Activated CD4-positive, alpha-beta memory T cell treated with anti-CD3 and anti-CD28 coated beads, Interleukin-2, amount 10 ng/mL, durations not matched to agents 7 days and 5 days (primary cell): ENCODE measurements at regions of chr19 and their contacts with region 1.

Region 1: GRCh38 chr19:17405250-17406038 is at the start of gene BST2:
- DNase-seq: peak; percentile 69
- H3K4me3 Mint-ChIP-seq: peak within 1 kb of the TSS; percentile 93
- H3K27ac Mint-ChIP-seq: peak within 1 kb of the TSS; percentile 98
- H3K4me1 Mint-ChIP-seq: peaks cover 35% of the 10 kb centered on the region
- H3K27me3 Mint-ChIP-seq: no peaks in the 10 kb centered on the region
- total RNA-seq, gene BST2: 288 to 301 TPM

Region 2: DNA sequence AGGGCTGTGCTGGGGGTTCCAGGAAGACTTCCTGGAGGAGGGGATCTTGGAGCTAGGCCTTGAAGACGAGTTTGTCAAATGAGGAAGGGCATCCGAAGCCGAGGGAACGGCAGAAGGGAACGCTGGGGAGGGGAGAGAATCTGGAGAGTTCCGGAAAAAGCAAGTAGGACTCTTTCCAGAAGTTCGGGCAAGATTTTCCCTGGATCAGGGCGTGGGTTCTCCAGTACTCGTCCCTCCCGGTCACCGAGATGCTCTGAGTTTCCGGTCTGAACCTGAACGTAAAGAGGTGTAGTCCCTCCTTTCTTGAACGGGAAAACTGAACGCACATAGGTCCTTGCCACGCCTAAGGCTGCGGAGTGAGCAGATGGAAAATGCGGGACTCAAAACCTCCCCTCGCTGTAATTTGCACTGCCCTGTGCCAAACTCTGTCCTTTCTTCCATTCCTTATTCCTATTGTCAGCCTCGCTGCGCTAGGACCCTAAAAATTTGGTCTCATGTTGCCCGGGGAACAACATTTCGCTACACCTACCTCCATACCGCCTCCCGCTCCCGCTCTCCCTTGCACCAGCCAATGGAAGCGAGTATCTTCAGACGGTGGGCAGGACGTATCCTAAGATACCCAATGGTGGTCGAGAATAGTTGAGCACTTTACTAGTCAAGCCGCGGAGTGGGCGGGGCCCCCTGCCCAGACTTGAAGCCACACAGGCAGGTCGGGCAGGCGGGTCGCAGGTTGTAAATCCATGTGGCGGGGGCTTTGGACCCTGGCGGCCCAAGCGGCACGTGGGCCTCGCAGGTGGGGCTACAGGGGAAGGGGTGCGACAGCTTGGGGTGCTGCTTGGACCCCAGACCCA is 68.3 kb before region 1 on chr19 and contains the start of gene GTPBP3:
- CTCF ChIA-PET with region 1: no interaction called
- POLR2A ChIA-PET with region 1: interaction called, 10 read pairs
- DNase-seq: peak; percentile 98
- H3K4me3 Mint-ChIP-seq: peak within 1 kb of the TSS; percentile 81
- H3K27ac Mint-ChIP-seq: peak within 1 kb of the TSS; percentile 89
- H3K4me1 Mint-ChIP-seq: peaks cover 55% of the 10 kb centered on the region
- H3K27me3 Mint-ChIP-seq: no peaks in the 10 kb centered on the region
- total RNA-seq, gene GTPBP3: 30.2 to 34.2 TPM

Region 3: GRCh38 chr19:17390665-17391370 is 14.6 kb before region 1 on chr19:
- CTCF ChIA-PET with region 1: interaction called, 9 read pairs
- POLR2A ChIA-PET with region 1: interaction called, 23 read pairs
- DNase-seq: peak; percentile 86
- H3K4me3 Mint-ChIP-seq: peak overlapping the region; percentile 76
- H3K27ac Mint-ChIP-seq: no peak overlapping the region
- H3K4me1 Mint-ChIP-seq: peaks cover 27% of the 10 kb centered on the region
- H3K27me3 Mint-ChIP-seq: peaks cover 27% of the 10 kb centered on the region

Region 4: GRCh38 chr19:17419621-17420466 is 14.4 kb after region 1 on chr19 and contains the start of gene MVB12A:
- CTCF ChIA-PET with region 1: interaction called, 14 read pairs
- POLR2A ChIA-PET with region 1: interaction called, 62 read pairs
- DNase-seq: peak; percentile 97
- H3K4me3 Mint-ChIP-seq: peak within 1 kb of the TSS; percentile 84
- H3K27ac Mint-ChIP-seq: peak within 1 kb of the TSS; percentile 86
- H3K4me1 Mint-ChIP-seq: peaks cover 26% of the 10 kb centered on the region
- H3K27me3 Mint-ChIP-seq: no peaks in the 10 kb centered on the region
- total RNA-seq, gene MVB12A: 44.5 to 45.3 TPM

Region 5: DNA sequence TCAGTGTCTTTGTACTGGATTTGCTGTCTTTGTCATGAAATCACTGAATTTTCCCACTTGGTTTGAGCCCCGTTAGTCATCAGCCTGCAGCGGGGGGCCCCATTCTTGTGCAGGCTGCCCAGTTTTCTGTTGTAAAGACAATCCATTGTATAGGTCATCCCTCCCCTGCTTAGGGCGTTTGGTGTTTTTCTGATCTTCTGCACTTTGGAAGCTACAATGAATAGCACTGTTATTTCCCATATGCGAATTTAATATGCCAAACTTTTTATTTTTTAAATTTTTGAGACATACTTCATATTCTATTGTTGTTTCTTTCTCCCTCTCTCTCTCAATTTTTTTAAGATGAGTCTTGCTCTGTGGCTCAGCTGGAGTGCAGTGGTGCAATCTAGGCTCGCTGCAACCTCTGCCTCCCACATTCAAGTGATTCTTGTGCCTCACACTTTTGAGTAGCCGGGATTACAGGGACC is 73.9 kb after region 1 on chr19:
- CTCF ChIA-PET with region 1: no interaction called
- POLR2A ChIA-PET with region 1: no interaction called
- DNase-seq: no peak
- H3K4me3 Mint-ChIP-seq: no peak overlapping the region
- H3K27ac Mint-ChIP-seq: no peak overlapping the region
- H3K4me1 Mint-ChIP-seq: no peaks in the 10 kb centered on the region
- H3K27me3 Mint-ChIP-seq: no peaks in the 10 kb centered on the region